Common myeloid progenitor, CD34-positive (primary cell): ENCODE measurements at regions of chr2 and their contacts with region 1.

Region 1: GRCh38 chr2:199488772-199489400 is 31.1 kb upstream of the SATB2 start:
- DNase-seq: peak; percentile 56 to 72 (median 57)
- H3K4me3 ChIP-seq: no peak overlapping the region
- H3K27ac ChIP-seq: no peak overlapping the region
- H3K4me1 ChIP-seq: no peaks in the 10 kb centered on the region
- H3K27me3 ChIP-seq: no peaks in the 10 kb centered on the region

Region 2: GRCh38 chr2:198314559-198315153 is 1174.2 kb before region 1 on chr2:
- CTCF ChIA-PET with region 1: interaction called, 89 read pairs
- POLR2A ChIA-PET with region 1: no interaction called
- DNase-seq: peak; percentile 68 to 85 (median 79)
- H3K4me3 ChIP-seq: no peak overlapping the region
- H3K27ac ChIP-seq: no peak overlapping the region
- H3K4me1 ChIP-seq: no peaks in the 10 kb centered on the region
- H3K27me3 ChIP-seq: peaks cover 9 to 82% (median 30%) of the 10 kb centered on the region in 5 experiments

Region 3: DNA sequence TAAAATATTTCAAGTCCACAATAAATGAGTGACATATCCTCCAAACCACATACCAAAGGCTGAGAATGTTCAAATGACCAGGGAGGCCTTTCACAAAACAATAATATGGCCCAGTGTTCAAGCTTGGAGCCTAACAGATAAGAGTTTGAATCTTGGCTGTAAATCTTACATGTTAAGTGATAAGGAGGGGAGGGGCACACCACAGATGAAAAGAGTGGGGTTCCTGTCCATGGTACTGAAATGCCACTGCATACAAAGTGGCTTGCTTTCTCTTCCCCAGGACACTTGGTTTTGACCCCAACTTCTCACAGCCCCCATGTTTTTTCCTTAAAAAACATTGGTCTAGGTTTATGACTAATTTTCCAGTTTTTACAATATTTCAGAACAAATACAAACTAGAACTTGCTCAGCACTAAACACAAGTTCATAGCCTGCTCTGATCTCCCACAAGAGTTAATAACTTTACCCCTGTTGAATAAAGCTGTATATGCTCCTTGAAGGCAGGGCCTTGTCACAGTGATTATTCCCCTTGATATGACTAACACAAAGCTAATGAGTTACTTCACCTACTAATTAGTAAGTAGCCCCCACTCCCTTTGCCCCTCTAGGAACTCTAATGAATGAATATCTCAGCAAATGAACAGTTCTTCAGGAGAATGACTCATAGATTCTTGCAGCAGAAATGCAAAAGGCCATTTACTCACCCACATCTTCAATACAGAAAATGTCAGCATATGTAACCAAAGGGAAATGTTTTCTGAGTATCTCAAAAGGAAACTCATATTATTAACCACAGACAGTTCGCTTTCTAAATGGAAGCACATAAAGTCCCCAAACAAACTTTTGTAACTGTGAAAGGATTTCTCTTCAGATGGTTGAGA is 173.3 kb before region 1 on chr2:
- CTCF ChIA-PET with region 1: no interaction called
- POLR2A ChIA-PET with region 1: no interaction called
- DNase-seq: peak in 2 of 3 donors; percentile 8 to 20
- H3K4me3 ChIP-seq: no peak overlapping the region
- H3K27ac ChIP-seq: no peak overlapping the region
- H3K4me1 ChIP-seq: no peaks in the 10 kb centered on the region
- H3K27me3 ChIP-seq: peaks cover 0 to 3% (median 0%) of the 10 kb centered on the region in 5 experiments

Region 4: DNA sequence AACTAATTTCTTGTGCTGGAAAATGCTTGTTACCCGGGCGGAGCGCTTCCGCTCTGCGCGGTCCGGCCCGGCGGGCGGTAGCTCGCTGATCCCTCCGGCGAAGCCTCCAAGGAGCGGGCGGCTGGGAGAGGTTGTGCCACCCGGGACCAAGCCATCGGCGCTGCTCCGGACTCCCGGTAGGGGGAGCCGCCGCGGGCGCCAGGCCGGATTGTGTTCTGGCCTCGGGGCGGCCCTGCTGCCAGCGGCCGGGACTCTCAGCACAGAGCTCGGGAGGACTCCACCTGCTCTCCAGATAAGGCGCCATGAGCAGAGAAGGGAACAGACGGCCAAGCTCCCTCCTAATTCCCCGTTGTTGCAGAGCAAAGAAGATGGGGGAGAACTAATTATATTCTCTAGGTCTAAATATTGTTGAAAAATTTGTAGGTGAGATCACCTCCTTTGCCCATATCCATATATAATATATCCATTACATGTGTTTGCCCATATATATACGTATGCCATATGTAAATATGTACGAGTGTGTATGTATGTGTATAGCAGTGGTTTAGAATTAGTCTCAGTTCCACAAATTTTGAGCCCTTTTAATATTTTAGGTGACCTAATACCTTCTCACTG is 17.3 kb before region 1 on chr2:
- CTCF ChIA-PET with region 1: interaction called, 28 read pairs
- POLR2A ChIA-PET with region 1: no interaction called
- DNase-seq: peak; percentile 51 to 64 (median 52)
- H3K4me3 ChIP-seq: peak overlapping the region in 3 of 7 experiments; percentile 25 to 55 (median 44)
- H3K27ac ChIP-seq: no peak overlapping the region
- H3K4me1 ChIP-seq: peaks cover 0 to 29% (median 18%) of the 10 kb centered on the region in 4 experiments
- H3K27me3 ChIP-seq: peaks cover 18 to 96% (median 60%) of the 10 kb centered on the region in 5 experiments

Region 5: DNA sequence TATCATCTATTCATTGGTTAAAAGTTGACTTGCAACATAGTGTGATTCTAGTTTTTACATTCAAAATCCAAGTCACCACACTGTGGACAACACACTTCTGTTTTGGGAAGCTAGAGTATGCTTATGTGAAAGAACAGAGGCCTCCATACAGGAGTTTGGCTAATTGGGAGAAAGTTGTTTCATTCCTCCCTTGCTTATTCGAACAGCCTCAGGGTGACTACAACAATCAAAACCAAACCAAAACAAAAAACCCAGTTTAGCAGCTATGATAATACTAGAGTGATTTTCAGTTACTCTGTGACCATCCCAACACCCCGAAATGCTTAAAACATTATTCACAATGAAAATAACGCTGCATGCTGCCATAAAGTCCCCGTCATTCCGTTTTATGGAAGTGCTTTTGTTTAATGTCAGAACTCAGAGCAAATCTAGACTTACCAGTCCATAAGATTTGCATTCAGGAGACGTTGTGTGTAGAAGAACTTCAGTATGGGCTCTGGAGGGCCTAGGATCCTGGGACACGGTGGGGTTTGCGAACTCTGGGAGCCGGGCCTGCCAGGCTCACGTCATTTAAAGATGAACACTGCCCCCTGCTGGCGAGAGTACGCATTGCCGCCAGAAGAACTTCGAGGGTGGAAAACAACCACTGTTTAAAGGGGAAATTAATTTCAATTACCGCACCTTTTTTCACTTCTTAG is 250.7 kb after region 1 on chr2:
- CTCF ChIA-PET with region 1: interaction called, 11 read pairs
- POLR2A ChIA-PET with region 1: no interaction called
- DNase-seq: peak; percentile 65 to 83 (median 76)
- H3K4me3 ChIP-seq: peak overlapping the region in 3 of 7 experiments; percentile 20 to 34 (median 31)
- H3K27ac ChIP-seq: no peak overlapping the region
- H3K4me1 ChIP-seq: peaks cover 20 to 31% (median 27%) of the 10 kb centered on the region in 4 experiments
- H3K27me3 ChIP-seq: no peaks in the 10 kb centered on the region